Calu3 (cell line): ENCODE measurements at regions of chr7 and their contacts with region 1.

Region 1: DNA sequence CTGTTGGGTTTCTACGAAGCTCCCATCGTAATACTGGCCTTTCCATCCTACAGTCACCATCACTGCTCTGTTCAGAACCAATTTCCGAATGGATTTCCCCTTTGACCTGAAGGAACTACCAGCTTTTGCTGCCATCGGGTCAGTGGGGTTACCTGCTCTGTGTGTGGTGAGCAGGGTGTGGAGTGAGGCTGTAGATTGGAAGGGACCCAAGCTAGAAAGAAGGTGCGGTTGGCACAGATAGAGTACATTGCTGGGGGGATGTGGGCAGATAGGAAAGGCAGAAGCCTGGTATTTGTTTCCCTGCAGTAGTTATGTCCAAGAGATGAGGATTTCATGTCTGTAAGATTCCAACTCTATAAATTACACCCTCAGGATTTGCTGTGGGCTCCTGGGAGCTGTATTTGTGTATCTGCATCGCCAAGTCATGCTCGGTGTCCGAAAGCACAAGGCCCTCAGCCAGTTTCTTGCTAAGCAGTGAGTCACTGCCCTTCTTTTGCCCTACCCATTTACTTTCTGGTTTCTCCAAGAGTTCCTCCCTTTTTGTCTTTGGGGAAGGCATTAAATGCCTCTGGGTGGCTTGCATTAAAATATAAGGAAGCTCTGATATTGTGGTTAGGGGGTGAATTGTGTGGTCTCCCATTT is 15.4 kb downstream of the CLCN1 start:
- DNase-seq: peak; percentile 59
- H3K4me3 Mint-ChIP-seq: no peak overlapping the region
- H3K27ac Mint-ChIP-seq: peak overlapping the region; percentile 6
- H3K4me1 Mint-ChIP-seq: peaks cover 45% of the 10 kb centered on the region
- H3K27me3 Mint-ChIP-seq: no peaks in the 10 kb centered on the region
- CTCF ChIP-seq: no peak

Region 2: GRCh38 chr7:142612237-142612881 is 718.9 kb before region 1 on chr7:
- CTCF ChIA-PET with region 1: no interaction called
- intact Hi-C with region 1: no loop called
- DNase-seq: no peak
- H3K4me3 Mint-ChIP-seq: no peak overlapping the region
- H3K27ac Mint-ChIP-seq: no peak overlapping the region
- H3K4me1 Mint-ChIP-seq: no peaks in the 10 kb centered on the region
- H3K27me3 Mint-ChIP-seq: peaks cover 74% of the 10 kb centered on the region
- CTCF ChIP-seq: no peak

Region 3: DNA sequence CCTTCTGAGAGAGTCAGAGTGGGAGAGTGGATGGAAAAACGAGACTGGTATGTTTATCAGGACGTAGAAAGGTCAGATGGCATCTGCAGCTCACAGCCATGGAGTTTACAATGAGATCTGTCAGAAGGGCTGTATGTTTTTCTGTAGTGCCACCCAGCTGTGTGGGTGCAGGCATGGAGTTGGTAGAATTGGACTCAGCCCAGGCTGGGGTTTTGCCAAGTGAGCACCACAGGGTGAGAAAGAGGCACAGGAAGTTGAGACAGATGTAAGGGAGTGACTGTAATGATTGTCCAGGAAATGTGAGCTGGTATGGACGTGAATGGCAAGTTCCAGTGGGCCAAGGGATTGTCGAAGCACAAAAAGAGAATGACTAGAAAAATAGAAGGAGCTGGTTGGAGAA is 40.8 kb after region 1 on chr7:
- CTCF ChIA-PET with region 1: interaction called, 3 read pairs
- intact Hi-C with region 1: loop called (anchors 5 kb)
- DNase-seq: peak; percentile 40
- H3K4me3 Mint-ChIP-seq: no peak overlapping the region
- H3K27ac Mint-ChIP-seq: no peak overlapping the region
- H3K4me1 Mint-ChIP-seq: peaks cover 57% of the 10 kb centered on the region
- H3K27me3 Mint-ChIP-seq: no peaks in the 10 kb centered on the region
- CTCF ChIP-seq: no peak

Region 4: GRCh38 chr7:143391462-143392404 is 60.4 kb after region 1 on chr7:
- CTCF ChIA-PET with region 1: no interaction called
- intact Hi-C with region 1: no loop called
- DNase-seq: no peak
- H3K4me3 Mint-ChIP-seq: no peak overlapping the region
- H3K27ac Mint-ChIP-seq: no peak overlapping the region
- H3K4me1 Mint-ChIP-seq: no peaks in the 10 kb centered on the region
- H3K27me3 Mint-ChIP-seq: no peaks in the 10 kb centered on the region
- CTCF ChIP-seq: no peak